H1 (cell line): ENCODE measurements at regions of chr1 and their contacts with region 1.

Region 1: DNA sequence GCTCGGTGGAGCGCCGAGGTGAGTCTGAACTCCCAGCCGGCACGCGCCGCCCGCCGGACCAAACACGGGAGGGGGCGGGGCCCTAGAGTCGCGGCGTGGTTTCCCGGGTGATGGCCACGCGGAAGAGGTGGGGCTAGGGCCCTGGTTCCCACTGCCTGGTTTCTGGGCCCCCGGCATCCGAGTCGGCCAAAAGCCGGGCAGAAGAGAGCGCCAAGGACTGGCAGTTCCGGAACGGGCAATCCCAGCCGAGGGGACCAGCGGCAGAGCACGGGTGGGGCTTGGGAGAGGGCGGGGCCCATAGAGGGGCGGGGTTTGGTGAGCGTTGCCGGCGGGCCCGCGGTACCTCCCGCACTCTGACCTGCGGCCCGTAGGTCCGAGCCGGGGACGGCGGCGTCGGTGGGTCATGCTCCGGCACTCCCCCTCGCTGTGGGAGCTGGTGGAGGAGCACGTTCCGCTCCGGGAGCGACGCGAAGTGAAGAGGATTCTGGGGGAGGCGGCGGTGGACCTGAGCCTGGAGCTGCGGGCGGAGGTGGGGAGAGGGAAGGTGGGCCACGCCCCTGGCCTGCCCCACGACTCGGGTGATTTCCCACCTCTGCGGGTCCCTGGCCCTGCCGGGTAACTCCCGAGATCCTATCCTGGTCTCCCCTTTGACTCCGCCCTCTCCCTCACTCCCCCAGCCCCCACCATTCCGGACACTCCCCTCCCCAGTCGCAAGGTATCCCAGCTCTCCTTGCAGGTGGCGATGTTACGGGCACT is at the start of gene CCDC24:
- DNase-seq: peak in 1 of 2 experiments; percentile 92
- H3K4me3 ChIP-seq: peak within 1 kb of the TSS; percentile 48 to 72 (median 64)
- H3K27ac ChIP-seq: no peak within 1 kb of the TSS
- H3K4me1 ChIP-seq: peaks cover 0 to 5% (median 4%) of the 10 kb centered on the region in 4 experiments; a peak in 5 of 7 replicates
- H3K27me3 ChIP-seq: no peaks in the 10 kb centered on the region
- CTCF ChIP-seq: no peak
- EP300 ChIP-seq: no peak; a peak in 1 of 3 replicates
- POLR2A ChIP-seq: peak; percentile 21 to 72
- RAD21 ChIP-seq: no peak
- total RNA-seq, gene CCDC24: 10.5 and 11.2 TPM in 2 replicates

Region 2: DNA sequence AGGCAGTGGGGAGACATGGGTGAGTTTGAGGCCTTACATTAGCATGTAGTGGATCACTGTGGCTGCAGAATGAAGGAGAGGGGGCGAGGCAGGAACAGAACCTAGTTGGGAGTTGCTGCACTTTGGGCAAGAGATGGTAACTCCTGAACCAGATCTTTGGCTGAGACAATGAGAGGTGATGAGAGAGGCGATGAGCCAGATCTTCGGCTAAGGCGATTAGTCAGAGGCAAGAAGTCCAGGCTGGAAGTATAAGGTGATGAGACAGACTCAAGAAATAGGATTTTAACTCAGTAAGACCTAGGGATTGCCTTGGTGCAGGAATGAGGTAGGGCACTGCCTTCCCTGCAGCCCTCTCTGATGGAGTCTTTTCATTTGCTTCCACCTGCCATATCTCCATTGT is 67.1 kb before region 1 on chr1:
- CTCF ChIA-PET with region 1: no interaction called
- POLR2A ChIA-PET with region 1: no interaction called
- DNase-seq: no peak
- H3K4me3 ChIP-seq: no peak overlapping the region
- H3K27ac ChIP-seq: no peak overlapping the region
- H3K4me1 ChIP-seq: no peaks in the 10 kb centered on the region
- H3K27me3 ChIP-seq: no peaks in the 10 kb centered on the region
- CTCF ChIP-seq: no peak
- EP300 ChIP-seq: no peak
- POLR2A ChIP-seq: no peak
- RAD21 ChIP-seq: no peak

Region 3: GRCh38 chr1:43979528-43980254 is 12.0 kb before region 1 on chr1:
- CTCF ChIA-PET with region 1: interaction called, 34 read pairs
- POLR2A ChIA-PET with region 1: interaction called, 189 read pairs
- DNase-seq: peak in 1 of 2 experiments; percentile 73
- H3K4me3 ChIP-seq: peak overlapping the region; percentile 42 to 74 (median 64)
- H3K27ac ChIP-seq: no peak overlapping the region
- H3K4me1 ChIP-seq: peaks cover 4 to 17% (median 15%) of the 10 kb centered on the region in 4 experiments
- H3K27me3 ChIP-seq: no peaks in the 10 kb centered on the region
- CTCF ChIP-seq: no peak
- EP300 ChIP-seq: no peak
- POLR2A ChIP-seq: no peak
- RAD21 ChIP-seq: no peak

Region 4: GRCh38 chr1:44012941-44013609 is 21.4 kb after region 1 on chr1:
- CTCF ChIA-PET with region 1: interaction called, 71 read pairs
- POLR2A ChIA-PET with region 1: interaction called, 544 read pairs
- DNase-seq: no peak
- H3K4me3 ChIP-seq: no peak overlapping the region
- H3K27ac ChIP-seq: no peak overlapping the region
- H3K4me1 ChIP-seq: peaks cover 0 to 8% (median 2%) of the 10 kb centered on the region in 4 experiments; a peak in 3 of 7 replicates
- H3K27me3 ChIP-seq: no peaks in the 10 kb centered on the region
- CTCF ChIP-seq: no peak
- EP300 ChIP-seq: no peak
- POLR2A ChIP-seq: no peak
- RAD21 ChIP-seq: no peak

Region 5: GRCh38 chr1:44036409-44037139 is 44.9 kb after region 1 on chr1:
- CTCF ChIA-PET with region 1: interaction called, 478 read pairs
- POLR2A ChIA-PET with region 1: interaction called, 544 read pairs
- DNase-seq: peak; percentile 23 to 80
- H3K4me3 ChIP-seq: no peak overlapping the region
- H3K27ac ChIP-seq: no peak overlapping the region
- H3K4me1 ChIP-seq: peaks cover 6 to 20% (median 12%) of the 10 kb centered on the region in 4 experiments; a peak in 6 of 7 replicates
- H3K27me3 ChIP-seq: no peaks in the 10 kb centered on the region
- CTCF ChIP-seq: peak; percentile 90 to 92 (median 91)
- EP300 ChIP-seq: no peak
- POLR2A ChIP-seq: no peak
- RAD21 ChIP-seq: peak; percentile 81 to 88